Head of caudate nucleus (tissue), 42 donors: ENCODE measurements at regions of chr17 and their contacts with region 1.

Region 1: DNA sequence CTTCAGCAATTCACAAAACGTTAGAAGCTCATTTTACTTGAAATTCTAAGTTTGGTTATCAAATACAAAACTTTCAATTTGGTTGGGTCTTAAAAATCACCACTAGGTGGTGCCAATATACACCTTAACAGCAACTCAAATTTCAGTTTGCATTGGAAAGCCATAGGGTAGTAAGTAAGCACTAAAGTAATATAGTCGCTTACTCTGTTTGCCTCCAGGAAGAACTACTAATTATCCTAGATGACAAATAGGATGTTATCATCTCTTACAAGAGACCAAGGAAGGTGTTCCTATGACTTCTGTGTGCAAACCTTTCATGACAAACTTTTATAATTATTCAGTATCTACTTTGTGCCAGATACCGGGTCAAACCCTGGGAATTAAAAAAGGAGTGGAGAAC is 93.3 kb downstream of the MYO1D start:
- DNase-seq: peak in 5 of 42 donors; percentile 14 to 58 (median 21)

Region 2: GRCh38 chr17:32877164-32877764 is 93.7 kb after region 1 on chr17:
- intact Hi-C with region 1: loop called (anchors 2 kb)
- DNase-seq: peak; percentile 54 to 95 (median 90)

Region 3: DNA sequence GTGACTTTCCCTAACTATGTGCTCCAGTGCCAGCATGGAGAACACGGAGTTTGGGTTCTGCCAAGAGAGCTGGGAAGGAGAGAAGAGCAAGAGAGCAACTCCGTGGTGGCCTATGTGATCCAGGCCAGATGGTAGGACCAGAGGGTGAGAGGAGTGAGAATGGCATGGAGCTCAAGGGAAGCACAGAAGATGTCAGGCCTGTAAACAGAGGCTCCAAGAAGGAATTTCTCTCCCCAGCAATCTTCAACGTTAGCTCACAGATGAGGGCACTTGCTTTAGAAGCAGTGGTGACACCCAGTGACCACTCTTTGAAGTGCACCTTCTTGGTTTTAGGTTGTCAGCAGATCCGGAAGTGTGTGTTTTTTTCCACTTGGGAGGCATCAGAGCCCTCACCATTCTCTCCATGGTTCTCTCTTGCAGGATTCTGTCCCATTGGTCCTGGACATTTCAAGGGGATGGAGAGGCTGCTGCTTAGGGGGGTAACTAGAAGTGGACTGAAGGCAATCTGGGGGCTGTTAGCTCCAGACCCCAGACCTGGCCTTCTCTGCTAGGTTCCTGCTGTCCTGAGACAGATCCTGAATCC is 126.3 kb after region 1 on chr17:
- intact Hi-C with region 1: loop called (anchors 10 kb)
- DNase-seq: peak in 41 of 42 donors; percentile 19 to 92 (median 78)